Spleen (tissue), 13 donors: ENCODE measurements at regions of chr22 and their contacts with region 1.

Region 1: DNA sequence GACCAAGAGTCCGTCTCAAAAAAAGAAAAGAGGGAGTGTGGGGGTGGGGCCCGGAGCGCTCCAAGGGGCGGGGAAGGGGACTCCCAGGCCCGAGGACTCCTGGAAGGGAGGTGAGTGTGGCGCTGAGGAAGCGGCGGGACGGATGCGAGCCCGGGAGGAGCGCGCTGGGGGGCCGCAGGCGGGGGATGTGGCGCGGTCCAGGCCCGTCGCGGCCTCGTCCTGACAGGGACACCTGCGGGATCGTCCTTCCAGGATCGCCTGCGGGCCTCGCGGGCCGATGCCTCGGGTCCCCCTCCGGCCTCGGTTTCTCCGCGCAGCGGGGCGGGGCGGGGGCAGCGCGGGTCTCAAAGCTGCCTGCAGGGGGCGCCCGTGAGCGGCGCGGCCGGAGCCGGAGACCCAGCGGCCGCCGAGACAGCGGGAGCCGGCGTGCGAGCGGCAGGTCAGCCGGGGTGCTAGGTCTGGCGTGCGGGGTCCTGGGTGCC is 3.8 kb upstream of the ADORA2A start:
- DNase-seq: peak; percentile 95
- H3K4me3 ChIP-seq: peak overlapping the region; percentile 47 to 74 (median 63)
- H3K27ac ChIP-seq: peak overlapping the region in 7 of 8 donors; percentile 66 to 96 (median 79)
- H3K4me1 ChIP-seq: peaks cover 17 to 91% (median 72%) of the 10 kb centered on the region in 6 donors
- H3K27me3 ChIP-seq: peaks cover 0 to 10% (median 0%) of the 10 kb centered on the region in 7 donors
- CTCF ChIP-seq: peak; percentile 57 to 99 (median 96)
- POLR2A ChIP-seq: no peak

Region 2: GRCh38 chr22:24506802-24507438 is 83.4 kb after region 1 on chr22:
- intact Hi-C with region 1: loop called (anchors 5 kb)
- DNase-seq: no peak
- H3K4me3 ChIP-seq: no peak overlapping the region
- H3K27ac ChIP-seq: peak overlapping the region in 6 of 8 donors; percentile 62 to 86 (median 71)
- H3K4me1 ChIP-seq: peaks cover 15 to 100% (median 50%) of the 10 kb centered on the region in 6 donors
- H3K27me3 ChIP-seq: no peaks in the 10 kb centered on the region
- CTCF ChIP-seq: no peak
- POLR2A ChIP-seq: no peak